GM10248 (cell line): ENCODE measurements at regions of chr14 and their contacts with region 1.

Region 1: DNA sequence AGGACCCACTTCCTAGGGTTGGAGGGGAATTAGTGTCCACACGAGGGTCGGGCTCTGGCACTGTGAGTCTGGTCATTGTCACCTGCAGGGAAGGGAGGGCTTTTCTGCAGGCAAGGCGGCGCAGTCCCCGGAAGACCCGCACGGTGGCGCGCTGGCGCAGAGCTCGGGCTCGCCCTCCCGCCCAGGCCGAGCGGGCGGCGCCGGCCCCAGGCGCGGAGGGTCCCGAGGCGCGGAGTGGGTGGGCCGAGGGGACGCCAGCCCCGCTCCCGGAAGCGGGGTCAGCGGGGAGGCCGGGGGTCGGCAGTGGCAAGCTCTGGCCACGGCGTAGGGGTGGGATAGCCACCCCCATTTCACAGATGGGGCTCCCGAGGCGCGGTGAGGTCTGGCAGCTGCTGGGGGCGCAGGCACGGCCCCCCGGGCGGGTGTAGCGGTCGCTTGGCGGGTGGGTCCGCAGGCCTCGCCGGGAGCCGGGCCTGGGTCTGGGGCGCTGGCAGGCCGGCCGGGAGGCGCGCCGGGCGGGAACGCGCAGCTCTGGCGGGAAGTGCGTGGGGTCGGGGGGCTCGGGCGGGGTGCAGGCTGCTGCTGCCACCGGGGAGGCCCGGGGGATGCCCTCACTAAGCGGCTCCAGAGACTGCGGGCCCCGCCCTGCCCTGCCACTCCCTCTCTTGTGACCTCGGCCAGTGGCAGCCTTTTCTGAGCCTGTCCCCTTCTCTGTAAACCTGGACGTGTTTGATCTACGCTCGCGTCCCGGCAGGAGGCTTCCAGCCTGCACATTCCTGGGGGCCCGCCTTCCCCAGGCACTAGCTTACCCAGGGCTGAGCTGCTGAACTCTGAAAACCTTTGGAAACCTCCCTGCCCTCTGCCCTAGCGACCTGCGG is 46.1 kb downstream of the CYP46A1 start:
- DNase-seq: peak; percentile 86
- CTCF ChIP-seq: peak; percentile 84

Region 2: GRCh38 chr14:99740411-99740810 is 10.2 kb after region 1 on chr14:
- CTCF ChIA-PET with region 1: interaction called, 14 read pairs
- POLR2A ChIA-PET with region 1: no interaction called
- DNase-seq: no peak
- CTCF ChIP-seq: no peak

Region 3: DNA sequence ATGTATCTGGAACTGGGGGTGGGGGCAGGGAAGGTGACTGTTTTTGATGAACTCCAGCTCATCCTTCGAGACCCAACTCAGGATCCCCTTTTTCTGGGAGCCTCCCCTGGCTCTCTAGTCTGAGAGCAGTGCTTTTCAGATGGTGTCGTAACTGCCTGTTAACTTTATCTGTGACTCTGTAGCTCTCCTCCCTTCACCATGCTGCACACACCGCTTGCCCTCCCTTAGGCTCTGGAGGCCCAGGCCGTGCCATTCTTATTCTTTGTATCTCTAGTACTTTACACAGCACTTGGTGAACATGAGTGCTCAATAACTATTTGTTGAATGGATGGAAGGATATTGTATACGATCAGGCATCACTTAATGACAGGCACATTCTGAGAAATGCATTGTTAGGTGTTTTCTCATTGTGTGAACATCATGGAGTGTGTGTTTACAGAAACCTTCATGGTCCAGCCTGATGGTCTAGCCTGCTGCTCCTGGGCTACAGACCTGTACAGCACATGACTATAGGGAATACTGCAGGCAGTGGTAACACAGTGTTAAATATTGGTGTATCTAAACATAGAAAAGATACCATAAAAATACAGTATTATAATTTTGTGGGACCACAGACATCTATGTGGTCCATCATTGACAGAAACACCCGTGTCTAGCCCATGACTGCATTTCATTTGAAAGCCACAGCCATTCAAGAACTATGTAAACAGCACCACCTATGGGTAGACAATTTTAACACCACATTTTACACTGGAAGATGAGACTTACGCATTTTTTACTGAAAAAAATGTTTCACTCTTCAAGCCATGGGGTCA is 154.8 kb after region 1 on chr14:
- CTCF ChIA-PET with region 1: interaction called, 20 read pairs
- POLR2A ChIA-PET with region 1: no interaction called
- DNase-seq: peak; percentile 60
- CTCF ChIP-seq: peak; percentile 65